CD8-positive, alpha-beta T cell (primary cell): ENCODE measurements at regions of chr17 and their contacts with region 1.

Region 1: DNA sequence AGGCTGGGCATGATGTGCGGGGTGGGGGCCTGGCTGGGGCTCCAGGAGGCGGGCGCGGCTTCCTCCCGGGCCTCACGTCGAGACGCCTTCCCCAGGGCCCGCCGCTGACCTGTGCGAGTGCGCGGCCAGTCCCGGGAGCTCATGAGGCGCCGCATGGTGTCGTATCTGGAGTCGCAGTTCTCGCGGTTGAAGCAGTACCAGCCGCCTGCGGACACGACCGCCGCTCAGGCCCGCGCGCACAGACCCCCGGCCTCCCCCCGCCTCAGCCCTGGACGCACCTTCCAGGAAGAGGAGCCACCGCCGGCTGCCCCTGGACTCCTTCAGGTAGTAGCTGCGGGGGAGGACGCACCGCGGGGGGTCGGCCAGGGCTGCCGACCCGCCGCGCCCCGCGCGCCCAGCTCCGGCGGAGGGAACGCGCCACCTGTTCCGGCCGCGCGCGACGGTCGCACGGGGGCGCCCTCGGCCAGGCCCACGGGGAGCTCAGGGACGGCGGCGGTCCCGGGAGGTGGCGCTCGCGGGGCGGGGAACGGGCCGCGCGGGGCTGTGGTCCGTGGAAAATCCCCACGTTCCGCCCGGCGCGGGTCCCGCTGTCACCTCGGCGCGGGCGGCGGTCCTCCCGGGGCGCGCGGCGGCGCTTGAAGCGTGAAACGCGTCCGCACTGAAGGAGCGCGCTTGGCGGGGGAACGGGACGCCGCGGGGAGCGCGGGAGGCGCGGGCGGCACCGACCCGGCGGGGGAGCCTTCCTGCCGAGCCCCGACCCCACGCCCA is 1.4 kb downstream of the NOTUM start:
- DNase-seq: peak; percentile 71 to 92 (median 81)
- ATAC-seq: peak; percentile 93
- H3K4me3 ChIP-seq: peak overlapping the region; percentile 8 to 35
- H3K4me3 Mint-ChIP-seq: peak overlapping the region; percentile 15
- H3K27ac ChIP-seq: no peak overlapping the region
- H3K27ac Mint-ChIP-seq: no peak overlapping the region
- H3K4me1 ChIP-seq: peaks cover 6% of the 10 kb centered on the region
- H3K4me1 Mint-ChIP-seq: peaks cover 10% of the 10 kb centered on the region
- H3K27me3 ChIP-seq: peaks cover 6 to 22% of the 10 kb centered on the region in 2 experiments
- H3K27me3 Mint-ChIP-seq: peaks cover 13% of the 10 kb centered on the region
- CTCF ChIP-seq: peak; percentile 90

Region 2: DNA sequence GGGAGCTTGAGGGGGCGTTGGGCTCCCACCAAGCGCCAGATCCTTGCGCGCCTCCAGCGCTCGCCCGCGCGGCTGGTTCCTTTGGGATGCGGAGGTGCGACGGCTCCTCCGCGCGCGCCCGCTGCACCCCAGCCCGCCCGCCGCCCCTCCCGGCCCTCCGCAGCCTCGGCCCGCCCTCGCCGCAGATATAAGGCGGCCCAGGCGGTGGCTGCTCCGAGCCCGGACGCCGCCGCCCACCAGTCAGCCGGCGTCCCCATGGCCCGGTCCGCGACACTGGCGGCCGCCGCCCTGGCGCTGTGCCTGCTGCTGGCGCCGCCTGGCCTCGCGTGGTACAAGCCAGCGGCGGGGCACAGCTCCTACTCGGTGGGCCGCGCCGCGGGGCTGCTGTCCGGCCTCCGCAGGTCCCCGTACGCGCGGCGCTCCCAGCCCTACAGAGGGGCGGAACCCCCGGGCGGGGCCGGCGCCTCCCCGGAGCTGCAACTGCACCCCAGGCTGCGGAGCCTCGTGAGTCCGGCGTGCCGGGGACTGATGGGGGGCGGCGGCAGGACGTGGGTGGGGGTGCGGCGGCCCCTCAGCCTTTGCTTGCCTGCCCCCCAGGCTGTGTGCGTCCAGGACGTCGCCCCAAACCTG is 57.4 kb before region 1 on chr17 and contains the start of gene NPB:
- CTCF ChIA-PET with region 1: no interaction called
- POLR2A ChIA-PET with region 1: no interaction called
- intact Hi-C with region 1: no loop called
- DNase-seq: peak in 2 of 9 experiments; percentile 19 to 34
- ATAC-seq: peak; percentile 56
- H3K4me3 ChIP-seq: no peak within 1 kb of the TSS
- H3K4me3 Mint-ChIP-seq: no peak within 1 kb of the TSS
- H3K27ac ChIP-seq: no peak within 1 kb of the TSS
- H3K27ac Mint-ChIP-seq: no peak within 1 kb of the TSS
- H3K4me1 ChIP-seq: peaks cover 8% of the 10 kb centered on the region
- H3K4me1 Mint-ChIP-seq: peaks cover 4% of the 10 kb centered on the region
- H3K27me3 ChIP-seq: peaks cover 5 to 14% of the 10 kb centered on the region in 2 experiments
- H3K27me3 Mint-ChIP-seq: peaks cover 7% of the 10 kb centered on the region
- CTCF ChIP-seq: no peak
- total RNA-seq, gene NPB: 0.38 TPM in 1 of 2 experiments, not detected in the other

Region 3: DNA sequence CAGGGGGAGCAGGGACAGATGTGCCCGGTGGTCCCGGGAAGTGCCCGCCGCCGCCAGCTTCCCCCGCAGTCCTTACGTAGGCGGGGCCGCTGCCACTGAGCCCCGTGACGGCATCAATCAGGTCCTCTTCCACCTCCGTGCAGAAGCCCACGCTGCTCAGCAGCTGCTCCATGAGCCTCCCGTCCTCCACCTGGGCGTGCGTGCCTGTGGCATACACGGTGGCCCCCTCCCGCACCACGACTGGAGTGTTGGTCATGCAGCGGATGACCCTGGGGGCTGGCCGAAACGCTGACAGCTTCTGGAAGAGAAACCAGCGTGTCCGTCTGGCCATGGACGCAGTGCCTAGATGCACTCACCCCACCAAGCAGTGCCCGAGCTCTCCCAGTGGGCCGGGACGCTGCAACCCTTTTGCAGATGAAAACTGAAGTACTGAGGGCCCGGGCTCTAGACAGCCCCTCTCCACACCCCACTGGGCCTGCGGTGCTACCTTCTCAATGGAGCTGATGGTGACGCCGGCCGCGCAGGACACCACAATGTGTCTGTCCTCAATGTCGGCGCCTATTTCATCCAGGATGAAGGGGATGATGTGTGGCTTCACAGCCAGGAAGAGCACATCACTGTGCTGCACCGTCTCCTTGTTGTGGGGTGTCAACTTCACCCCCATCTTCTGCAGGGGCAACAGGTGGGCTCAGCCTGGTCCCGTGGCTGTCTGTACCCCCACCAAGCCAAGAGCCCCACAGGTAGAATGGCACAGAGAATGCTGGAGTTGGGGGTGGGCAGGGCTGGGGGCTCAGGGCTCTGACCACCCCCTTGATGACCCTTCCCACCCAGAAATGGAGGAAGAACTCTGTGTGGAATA is 24.5 kb before region 1 on chr17:
- CTCF ChIA-PET with region 1: interaction called, 11 read pairs
- POLR2A ChIA-PET with region 1: interaction called, 4 read pairs
- intact Hi-C with region 1: no loop called
- DNase-seq: no peak
- ATAC-seq: no peak
- H3K4me3 ChIP-seq: no peak overlapping the region
- H3K4me3 Mint-ChIP-seq: no peak overlapping the region
- H3K27ac ChIP-seq: no peak overlapping the region
- H3K27ac Mint-ChIP-seq: no peak overlapping the region
- H3K4me1 ChIP-seq: peaks cover 9% of the 10 kb centered on the region
- H3K4me1 Mint-ChIP-seq: peaks cover 2% of the 10 kb centered on the region
- H3K27me3 ChIP-seq: no peaks in the 10 kb centered on the region
- H3K27me3 Mint-ChIP-seq: peaks cover 2% of the 10 kb centered on the region
- CTCF ChIP-seq: no peak

Region 4: DNA sequence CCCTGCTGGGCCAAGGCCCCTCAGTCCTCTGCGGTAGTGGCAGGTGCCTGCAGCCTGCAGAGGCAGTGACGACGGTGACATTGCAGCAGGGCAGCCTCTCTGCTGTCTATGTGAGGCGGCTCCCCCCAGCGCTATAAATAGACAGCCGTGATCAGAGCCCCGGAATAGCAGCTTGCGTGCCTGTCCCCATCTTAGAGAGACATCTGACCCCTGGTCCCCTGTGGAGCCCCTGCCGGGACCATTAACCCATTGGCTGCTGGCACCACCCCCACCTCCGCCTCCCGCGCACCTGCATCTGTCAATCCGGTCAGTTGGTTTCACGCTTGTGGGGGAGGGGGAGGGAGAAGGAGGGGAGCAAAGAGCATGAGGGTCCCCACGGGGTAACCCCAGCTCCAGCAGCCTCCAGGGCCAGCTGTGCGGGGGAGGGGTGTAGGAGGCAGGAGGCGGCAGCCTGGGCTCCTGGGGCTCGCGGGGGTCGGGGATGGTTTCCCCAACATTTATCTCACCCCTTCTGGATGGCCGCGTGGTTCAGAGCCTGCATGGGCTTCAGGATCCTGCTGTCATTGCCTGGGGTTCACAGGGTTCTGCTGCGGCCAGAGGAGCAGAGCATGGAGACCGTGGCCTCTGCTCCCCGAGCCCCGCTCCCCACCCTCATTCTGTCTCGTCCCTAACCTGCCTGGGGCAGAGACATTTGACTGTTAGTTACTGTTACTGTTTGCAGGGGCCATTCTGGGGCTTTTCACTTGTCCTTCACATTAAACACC is 17.6 kb before region 1 on chr17:
- CTCF ChIA-PET with region 1: interaction called, 11 read pairs
- POLR2A ChIA-PET with region 1: no interaction called
- intact Hi-C with region 1: no loop called
- DNase-seq: no peak
- ATAC-seq: no peak
- H3K4me3 ChIP-seq: no peak overlapping the region
- H3K4me3 Mint-ChIP-seq: no peak overlapping the region
- H3K27ac ChIP-seq: no peak overlapping the region
- H3K27ac Mint-ChIP-seq: no peak overlapping the region
- H3K4me1 ChIP-seq: peaks cover 3% of the 10 kb centered on the region
- H3K4me1 Mint-ChIP-seq: no peaks in the 10 kb centered on the region
- H3K27me3 ChIP-seq: peaks cover 0 to 2% of the 10 kb centered on the region in 2 experiments
- H3K27me3 Mint-ChIP-seq: peaks cover 3% of the 10 kb centered on the region
- CTCF ChIP-seq: no peak

Region 5: DNA sequence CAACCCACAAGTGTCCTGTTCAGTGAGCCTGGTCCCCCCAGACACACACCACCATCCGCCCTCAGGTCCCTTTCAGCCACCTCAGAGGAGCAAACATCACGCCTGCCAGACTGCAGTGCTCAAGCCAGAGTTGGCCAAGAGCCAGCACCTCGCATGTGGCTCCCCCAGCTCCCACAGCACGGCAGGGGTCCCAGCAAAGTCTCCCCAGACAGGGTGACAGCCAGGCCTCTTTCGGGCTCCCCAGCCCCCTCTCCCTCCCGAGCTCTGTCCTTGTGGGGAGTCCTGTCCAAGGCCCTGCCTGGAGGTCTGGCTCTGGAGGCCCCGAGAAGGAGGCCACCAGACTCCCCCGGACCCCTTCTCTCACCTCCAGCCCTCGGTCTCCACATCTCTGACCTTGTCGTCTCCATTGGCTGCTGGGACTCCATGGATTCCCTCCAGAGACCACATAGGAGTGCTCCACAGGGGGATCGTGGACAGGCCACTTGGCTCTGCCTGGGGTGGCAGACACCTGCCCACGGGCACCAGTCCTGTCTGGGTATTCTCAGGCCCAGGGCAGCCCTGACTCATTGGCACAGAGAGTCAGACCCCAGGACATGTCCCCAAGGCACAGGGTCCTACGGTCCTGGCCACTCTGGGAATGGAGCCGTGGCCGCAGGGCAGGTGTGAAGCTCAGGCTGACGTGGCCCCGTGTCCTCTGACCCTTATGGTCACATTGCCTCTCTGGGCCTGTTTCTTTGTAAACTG is 10.7 kb before region 1 on chr17:
- CTCF ChIA-PET with region 1: interaction called, 13 read pairs
- POLR2A ChIA-PET with region 1: no interaction called
- intact Hi-C with region 1: no loop called
- DNase-seq: no peak
- ATAC-seq: no peak
- H3K4me3 ChIP-seq: no peak overlapping the region
- H3K4me3 Mint-ChIP-seq: no peak overlapping the region
- H3K27ac ChIP-seq: no peak overlapping the region
- H3K27ac Mint-ChIP-seq: no peak overlapping the region
- H3K4me1 ChIP-seq: peaks cover 5% of the 10 kb centered on the region
- H3K4me1 Mint-ChIP-seq: peaks cover 7% of the 10 kb centered on the region
- H3K27me3 ChIP-seq: no peaks in the 10 kb centered on the region
- H3K27me3 Mint-ChIP-seq: no peaks in the 10 kb centered on the region
- CTCF ChIP-seq: no peak

Region 6: DNA sequence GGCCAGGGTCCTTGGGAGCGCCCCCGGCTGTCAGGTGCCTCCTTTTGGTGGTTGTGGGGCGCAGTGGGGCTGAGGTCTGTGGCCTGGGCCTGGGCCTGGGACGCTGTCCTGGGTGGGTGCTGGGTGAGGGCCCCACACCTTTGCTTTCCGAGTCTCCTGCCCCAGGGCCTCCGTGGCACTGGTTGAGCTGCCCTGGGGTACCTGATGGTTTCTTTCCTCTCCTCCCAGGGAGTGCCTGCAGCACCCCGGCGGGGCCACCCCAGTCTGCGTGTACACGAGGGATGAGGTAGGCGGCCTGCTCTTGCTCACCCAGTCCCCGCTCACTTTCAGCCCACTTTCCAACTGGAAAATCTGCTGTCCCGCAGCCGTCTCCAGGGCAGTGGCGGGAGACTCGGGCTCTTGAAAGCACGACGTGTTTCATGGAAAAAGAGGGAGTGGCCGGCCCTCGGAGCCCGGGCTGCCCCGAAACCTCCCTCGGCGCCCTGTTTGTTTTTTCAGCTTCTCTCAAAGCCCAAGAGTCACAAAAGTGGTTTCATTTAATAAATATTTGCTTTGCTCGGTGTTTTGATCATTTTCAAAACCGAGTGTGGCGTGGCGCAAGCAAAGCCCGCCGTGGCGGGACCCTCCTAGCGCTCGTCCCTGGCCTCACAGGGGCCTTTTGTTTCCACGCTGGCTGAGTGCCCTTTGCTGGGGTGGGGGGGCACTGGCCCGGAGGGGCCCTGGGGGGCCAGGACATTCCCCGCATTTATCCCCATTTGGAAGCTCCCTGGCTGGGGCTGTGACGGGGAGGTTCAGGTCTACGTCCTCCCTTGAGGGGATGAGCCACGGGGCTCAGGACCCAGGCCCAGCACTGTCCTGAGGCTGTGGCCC is 35.3 kb after region 1 on chr17:
- CTCF ChIA-PET with region 1: interaction called, 11 read pairs
- POLR2A ChIA-PET with region 1: interaction called, 7 read pairs
- intact Hi-C with region 1: no loop called
- DNase-seq: no peak
- ATAC-seq: no peak
- H3K4me3 ChIP-seq: no peak overlapping the region
- H3K4me3 Mint-ChIP-seq: no peak overlapping the region
- H3K27ac ChIP-seq: no peak overlapping the region
- H3K27ac Mint-ChIP-seq: no peak overlapping the region
- H3K4me1 ChIP-seq: no peaks in the 10 kb centered on the region
- H3K4me1 Mint-ChIP-seq: peaks cover 3% of the 10 kb centered on the region
- H3K27me3 ChIP-seq: no peaks in the 10 kb centered on the region
- H3K27me3 Mint-ChIP-seq: no peaks in the 10 kb centered on the region
- CTCF ChIP-seq: no peak

Region 7: GRCh38 chr17:82153745-82154375 is 194.3 kb after region 1 on chr17:
- CTCF ChIA-PET with region 1: interaction called, 6 read pairs
- POLR2A ChIA-PET with region 1: no interaction called
- intact Hi-C with region 1: loop called (anchors 1 to 2 kb)
- DNase-seq: peak; percentile 71 to 92 (median 84)
- ATAC-seq: peak; percentile 100
- H3K4me3 ChIP-seq: no peak overlapping the region
- H3K4me3 Mint-ChIP-seq: no peak overlapping the region
- H3K27ac ChIP-seq: no peak overlapping the region
- H3K27ac Mint-ChIP-seq: peak overlapping the region; percentile 57
- H3K4me1 ChIP-seq: peaks cover 7% of the 10 kb centered on the region
- H3K4me1 Mint-ChIP-seq: peaks cover 5% of the 10 kb centered on the region
- H3K27me3 ChIP-seq: no peaks in the 10 kb centered on the region
- H3K27me3 Mint-ChIP-seq: no peaks in the 10 kb centered on the region
- CTCF ChIP-seq: peak; percentile 98

Region 8: DNA sequence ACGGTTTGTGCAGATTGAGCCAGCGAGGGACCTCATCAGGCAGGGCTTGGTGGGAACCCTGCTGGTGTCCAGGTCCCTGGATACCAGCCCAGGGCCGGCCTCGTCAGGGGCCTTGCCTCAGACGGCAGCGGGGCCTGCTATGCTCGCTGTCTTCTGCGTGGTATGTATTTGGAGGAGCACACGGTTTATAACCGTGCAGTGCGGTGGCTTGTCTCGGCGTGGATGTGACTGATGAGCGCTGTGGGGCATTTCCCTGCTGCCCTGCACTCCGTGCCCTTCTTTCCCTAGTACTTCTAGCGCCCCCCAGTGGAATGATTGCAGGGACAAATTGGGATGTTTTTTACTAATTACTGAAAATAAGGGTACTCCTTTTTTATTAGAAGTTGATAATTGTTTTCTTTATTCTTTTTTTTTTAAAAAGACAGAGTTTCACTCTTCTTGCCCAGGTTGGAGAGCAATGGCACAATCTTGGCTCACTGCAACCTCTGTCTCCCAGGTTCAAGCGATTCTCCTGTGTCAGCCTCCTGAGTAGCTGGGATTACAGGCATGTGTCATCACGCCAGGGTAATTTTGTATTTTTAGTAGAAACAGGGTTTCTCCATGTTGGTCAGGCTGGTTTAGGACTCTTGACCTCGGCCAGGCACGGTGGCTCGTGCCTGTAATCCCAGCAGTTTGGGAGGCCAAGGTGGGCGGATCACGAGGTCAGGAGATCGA is 807.7 kb after region 1 on chr17:
- CTCF ChIA-PET with region 1: no interaction called
- POLR2A ChIA-PET with region 1: no interaction called
- intact Hi-C with region 1: no loop called
- DNase-seq: peak in 5 of 9 experiments; percentile 39 to 54 (median 46)
- ATAC-seq: no peak
- H3K4me3 ChIP-seq: no peak overlapping the region
- H3K4me3 Mint-ChIP-seq: no peak overlapping the region
- H3K27ac ChIP-seq: no peak overlapping the region
- H3K27ac Mint-ChIP-seq: no peak overlapping the region
- H3K4me1 ChIP-seq: no peaks in the 10 kb centered on the region
- H3K4me1 Mint-ChIP-seq: peaks cover 17% of the 10 kb centered on the region
- H3K27me3 ChIP-seq: no peaks in the 10 kb centered on the region
- H3K27me3 Mint-ChIP-seq: no peaks in the 10 kb centered on the region
- CTCF ChIP-seq: peak; percentile 26